GM13977 (cell line): ENCODE measurements at regions of chr18 and their contacts with region 1.

Region 1: GRCh38 chr18:48488388-48488850 is 50.4 kb upstream of the CTIF start:
- DNase-seq: no peak
- CTCF ChIP-seq: no peak

Region 2: DNA sequence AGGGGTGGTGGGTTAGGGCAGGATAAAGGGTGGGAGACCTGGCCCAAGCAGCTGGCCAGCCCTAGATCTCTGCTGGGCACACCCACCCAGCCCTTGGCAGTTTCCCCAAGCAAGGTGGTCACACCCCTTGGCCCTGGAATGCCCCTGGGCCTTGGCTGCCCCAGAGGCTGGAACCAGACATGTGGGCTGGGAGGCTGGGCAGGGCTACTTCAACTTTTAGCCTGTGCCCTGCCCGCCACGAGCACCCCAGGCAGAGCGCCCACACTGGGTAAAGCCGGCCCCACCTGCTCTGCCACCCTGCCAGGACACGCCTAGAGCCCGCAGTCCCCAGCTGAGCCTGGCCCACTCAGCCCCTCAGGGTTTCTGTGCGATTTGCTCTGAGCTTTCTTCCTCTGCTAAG is 438.3 kb before region 1 on chr18:
- in situ Hi-C with region 1: no loop called
- DNase-seq: no peak
- CTCF ChIP-seq: no peak

Region 3: DNA sequence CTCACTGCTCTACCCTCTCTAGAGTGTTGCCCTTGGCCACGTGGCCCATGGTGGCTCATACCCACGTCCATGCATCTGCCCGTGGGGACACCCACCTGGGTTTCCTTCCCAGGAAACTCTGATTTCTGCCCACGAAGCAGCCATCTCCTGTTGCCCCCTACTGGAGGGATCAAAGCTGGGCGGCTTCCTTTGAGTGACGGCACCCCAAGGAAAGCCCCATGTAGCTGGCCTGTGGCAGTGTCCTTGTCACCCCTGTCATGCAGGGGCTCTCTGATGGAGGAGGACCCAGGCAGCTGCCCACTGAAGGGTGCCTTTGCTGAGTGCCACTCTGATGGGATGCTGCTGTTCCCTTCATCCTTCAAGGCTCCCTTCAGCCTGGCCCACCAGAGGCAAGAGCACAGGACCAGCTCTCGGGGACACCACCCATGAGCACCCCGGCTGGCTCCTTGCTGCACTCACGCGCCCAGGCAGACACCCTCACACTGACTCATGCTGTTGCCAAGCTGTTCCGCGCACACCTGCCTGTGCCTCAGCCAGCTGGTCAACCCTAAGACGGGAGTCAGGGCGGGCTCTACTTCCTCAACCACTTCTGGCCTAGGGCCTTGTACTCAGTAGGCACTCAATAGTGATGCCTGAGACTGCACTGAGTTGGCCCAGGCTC is 151.5 kb after region 1 on chr18:
- in situ Hi-C with region 1: loop called (anchors 10 kb)
- DNase-seq: peak; percentile 46
- CTCF ChIP-seq: peak; percentile 43